Calu3 (cell line): ENCODE measurements at regions of chr1 and their contacts with region 1.

Region 1: DNA sequence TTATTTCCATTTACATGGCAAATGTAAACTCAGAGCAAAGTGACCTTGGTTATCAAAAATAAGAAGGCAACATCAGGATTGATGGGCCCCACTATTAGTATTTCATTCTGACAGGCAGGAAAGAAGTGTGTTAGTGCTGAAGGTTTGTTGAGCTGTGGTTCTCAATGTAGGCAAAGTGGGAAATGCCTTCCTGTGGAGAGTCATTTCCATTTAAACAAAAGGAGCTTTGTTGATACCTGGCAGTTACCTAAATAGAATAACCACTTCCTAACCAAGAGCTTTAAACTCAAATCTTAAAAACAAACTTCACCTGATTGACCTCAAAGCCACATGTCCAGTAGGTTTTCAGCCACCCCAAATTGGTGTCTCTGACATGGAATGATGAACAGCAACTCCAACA is 579.9 kb upstream of the BEND5 start:
- DNase-seq: peak; percentile 37
- H3K4me3 Mint-ChIP-seq: no peak overlapping the region
- H3K27ac Mint-ChIP-seq: no peak overlapping the region
- H3K4me1 Mint-ChIP-seq: peaks cover 17% of the 10 kb centered on the region
- H3K27me3 Mint-ChIP-seq: no peaks in the 10 kb centered on the region
- CTCF ChIP-seq: no peak

Region 2: GRCh38 chr1:48931506-48932251 is 424.9 kb before region 1 on chr1:
- CTCF ChIA-PET with region 1: no interaction called
- intact Hi-C with region 1: loop called (anchors 5 kb)
- DNase-seq: peak; percentile 63
- H3K4me3 Mint-ChIP-seq: peak overlapping the region; percentile 12
- H3K27ac Mint-ChIP-seq: peak overlapping the region; percentile 9
- H3K4me1 Mint-ChIP-seq: peaks cover 13% of the 10 kb centered on the region
- H3K27me3 Mint-ChIP-seq: no peaks in the 10 kb centered on the region
- CTCF ChIP-seq: no peak

Region 3: GRCh38 chr1:49102752-49103151 is 253.8 kb before region 1 on chr1:
- CTCF ChIA-PET with region 1: interaction called, 6 read pairs
- intact Hi-C with region 1: loop called (anchors 5 kb)
- DNase-seq: peak; percentile 41
- H3K4me3 Mint-ChIP-seq: no peak overlapping the region
- H3K27ac Mint-ChIP-seq: peak overlapping the region; percentile 82
- H3K4me1 Mint-ChIP-seq: peaks cover 57% of the 10 kb centered on the region
- H3K27me3 Mint-ChIP-seq: no peaks in the 10 kb centered on the region
- CTCF ChIP-seq: no peak

Region 4: GRCh38 chr1:49306507-49307070 is 50.0 kb before region 1 on chr1:
- CTCF ChIA-PET with region 1: no interaction called
- intact Hi-C with region 1: no loop called
- DNase-seq: no peak
- H3K4me3 Mint-ChIP-seq: no peak overlapping the region
- H3K27ac Mint-ChIP-seq: no peak overlapping the region
- H3K4me1 Mint-ChIP-seq: no peaks in the 10 kb centered on the region
- H3K27me3 Mint-ChIP-seq: no peaks in the 10 kb centered on the region
- CTCF ChIP-seq: no peak

Region 5: DNA sequence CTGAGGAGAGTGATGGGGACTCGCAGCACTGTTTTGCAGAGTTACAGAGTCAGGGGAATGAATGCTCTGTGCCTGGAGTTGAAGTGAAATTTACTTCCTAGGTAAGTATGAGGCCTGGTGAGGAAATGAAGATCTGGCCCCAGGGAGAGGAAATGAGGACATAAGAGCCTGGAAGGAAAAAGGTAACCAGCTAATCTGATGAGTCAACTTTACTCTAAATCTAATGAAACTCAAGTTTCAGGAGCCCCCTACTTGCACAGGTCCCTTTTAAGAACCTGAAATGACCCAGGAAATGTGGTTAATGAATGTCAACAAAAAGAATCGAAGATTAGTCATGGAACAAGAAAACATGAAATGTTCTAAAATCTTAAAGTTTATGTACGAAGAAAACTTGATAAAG is 68.2 kb after region 1 on chr1:
- CTCF ChIA-PET with region 1: no interaction called
- intact Hi-C with region 1: loop called (anchors 2 kb)
- DNase-seq: peak; percentile 20
- H3K4me3 Mint-ChIP-seq: no peak overlapping the region
- H3K27ac Mint-ChIP-seq: peak overlapping the region; percentile 74
- H3K4me1 Mint-ChIP-seq: peaks cover 23% of the 10 kb centered on the region
- H3K27me3 Mint-ChIP-seq: no peaks in the 10 kb centered on the region
- CTCF ChIP-seq: no peak

Region 6: GRCh38 chr1:49630156-49630555 is 273.6 kb after region 1 on chr1:
- CTCF ChIA-PET with region 1: no interaction called
- intact Hi-C with region 1: loop called (anchors 5 kb)
- DNase-seq: peak; percentile 14
- H3K4me3 Mint-ChIP-seq: no peak overlapping the region
- H3K27ac Mint-ChIP-seq: no peak overlapping the region
- H3K4me1 Mint-ChIP-seq: peaks cover 13% of the 10 kb centered on the region
- H3K27me3 Mint-ChIP-seq: no peaks in the 10 kb centered on the region
- CTCF ChIP-seq: no peak